Esophagus muscularis mucosa (tissue), 4 donors: ENCODE measurements at regions of chr16 and their contacts with region 1.

Region 1: GRCh38 chr16:67521095-67521804 is 7.4 kb upstream of the RIPOR1 start:
- DNase-seq: peak; percentile 99
- H3K4me3 ChIP-seq: peak overlapping the region; percentile 49 to 60 (median 52)
- H3K27ac ChIP-seq: peak overlapping the region; percentile 80 to 93 (median 92)
- H3K4me1 ChIP-seq: peaks cover 10 to 19% (median 14%) of the 10 kb centered on the region in 4 donors
- H3K27me3 ChIP-seq: no peaks in the 10 kb centered on the region
- CTCF ChIP-seq: peak; percentile 64 to 96 (median 75)
- EP300 ChIP-seq: no peak
- POLR2A ChIP-seq: no peak

Region 2: GRCh38 chr16:67268136-67268579 is 253.1 kb before region 1 on chr16:
- intact Hi-C with region 1: no loop called
- DNase-seq: no peak
- H3K4me3 ChIP-seq: no peak overlapping the region
- H3K27ac ChIP-seq: no peak overlapping the region
- H3K4me1 ChIP-seq: no peaks in the 10 kb centered on the region
- H3K27me3 ChIP-seq: peaks cover 0 to 34% (median 0%) of the 10 kb centered on the region in 4 donors
- CTCF ChIP-seq: no peak
- EP300 ChIP-seq: no peak
- POLR2A ChIP-seq: no peak

Region 3: DNA sequence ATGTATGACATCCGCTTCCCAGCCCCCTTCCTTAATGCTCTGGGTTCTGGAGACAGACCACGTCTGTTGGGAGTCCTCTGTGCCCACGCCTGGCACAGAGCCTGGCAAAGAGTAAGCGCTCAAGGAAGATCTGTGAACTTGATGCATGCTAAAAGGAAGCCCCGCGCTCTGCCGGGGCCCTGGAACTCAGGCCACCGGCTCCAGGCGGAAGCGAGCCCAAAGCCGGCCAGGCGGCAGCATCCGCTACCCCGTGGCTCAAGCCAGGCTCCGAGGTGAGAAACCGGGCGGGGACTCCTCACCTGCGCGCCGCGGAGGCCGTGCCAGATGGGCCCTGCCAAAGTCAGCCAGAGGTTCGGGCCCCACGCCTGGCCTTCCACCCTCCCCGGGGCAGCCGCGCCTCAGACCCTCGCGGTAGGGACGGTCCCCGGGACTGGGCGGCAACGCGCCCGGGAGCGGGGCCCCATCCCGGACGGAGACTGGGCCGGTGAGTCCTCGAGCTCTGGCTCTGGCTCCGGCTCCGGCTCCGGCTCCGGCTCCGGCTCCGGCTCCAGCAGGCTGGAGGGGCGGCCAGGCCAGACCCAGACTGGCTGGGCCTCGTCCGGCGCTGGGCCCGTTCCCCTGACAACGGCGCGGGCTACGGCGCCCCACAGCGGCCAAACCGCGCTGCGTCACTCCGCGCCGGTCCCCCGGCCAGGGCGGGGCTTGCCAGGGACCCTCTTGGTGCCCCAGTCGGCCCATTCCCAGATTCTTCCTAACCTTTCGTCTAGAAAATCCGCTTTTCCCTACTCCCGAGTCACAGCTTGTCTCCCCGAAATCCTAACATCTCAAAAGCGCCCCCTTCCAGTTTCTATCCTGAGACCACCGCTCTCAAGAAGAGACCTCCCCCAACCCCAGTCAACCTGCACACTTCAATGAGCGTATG is 105.1 kb before region 1 on chr16 and contains the start of gene ZDHHC1:
- intact Hi-C with region 1: no loop called
- DNase-seq: no peak
- H3K4me3 ChIP-seq: peak within 1 kb of the TSS; percentile 70 to 93 (median 77)
- H3K27ac ChIP-seq: peak within 1 kb of the TSS; percentile 77 to 87 (median 82)
- H3K4me1 ChIP-seq: peaks cover 12 to 28% (median 19%) of the 10 kb centered on the region in 4 donors
- H3K27me3 ChIP-seq: no peaks in the 10 kb centered on the region
- CTCF ChIP-seq: peak; percentile 51 to 62 (median 57)
- EP300 ChIP-seq: no peak
- POLR2A ChIP-seq: no peak
- total RNA-seq, gene ZDHHC1: 11.6 to 27.5 (median 20.8) TPM

Region 4: DNA sequence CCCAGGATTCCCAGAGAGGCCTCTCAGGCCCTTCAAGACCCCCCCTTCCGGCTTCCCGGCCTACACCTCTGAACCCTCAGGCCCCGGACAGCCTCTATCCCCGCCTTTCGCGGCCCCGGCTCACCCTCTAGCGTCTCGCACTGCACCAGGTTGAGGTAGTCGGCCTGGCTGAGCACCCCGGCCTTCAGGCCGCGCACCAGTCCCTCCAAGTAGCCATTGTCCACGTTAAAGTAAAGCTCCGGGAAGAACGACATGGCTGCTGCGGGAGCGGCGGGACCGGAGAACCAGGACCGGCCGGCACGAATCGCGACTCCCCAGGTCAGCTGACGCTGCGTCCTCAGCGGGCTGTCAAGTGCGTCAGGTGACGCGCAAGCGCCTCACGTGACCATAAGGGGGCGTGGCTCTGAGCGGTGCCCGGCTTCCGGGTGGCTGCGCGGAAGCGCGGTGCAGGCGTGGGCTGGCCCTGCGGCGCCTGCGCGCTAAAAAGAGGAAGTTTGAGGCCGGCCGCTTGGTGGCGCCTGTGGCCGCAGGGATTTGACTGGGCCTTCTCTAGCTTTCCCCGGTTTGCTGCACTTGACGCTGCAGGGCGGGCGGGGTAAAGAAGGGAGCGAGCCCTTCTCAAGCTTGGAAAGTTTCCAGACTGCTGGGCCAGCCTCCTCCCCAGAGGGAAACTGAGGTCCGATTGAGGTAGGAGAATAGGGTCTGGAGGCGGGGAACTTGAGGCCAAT is 40.3 kb before region 1 on chr16 and contains the start of gene ATP6V0D1:
- intact Hi-C with region 1: loop called (anchors 5 kb)
- DNase-seq: peak; percentile 100
- H3K4me3 ChIP-seq: peak within 1 kb of the TSS; percentile 85 to 97 (median 90)
- H3K27ac ChIP-seq: peak within 1 kb of the TSS; percentile 92 to 97 (median 95)
- H3K4me1 ChIP-seq: peaks cover 38 to 65% (median 61%) of the 10 kb centered on the region in 4 donors
- H3K27me3 ChIP-seq: no peaks in the 10 kb centered on the region
- CTCF ChIP-seq: peak; percentile 90 to 96 (median 92)
- EP300 ChIP-seq: no peak
- POLR2A ChIP-seq: peak; percentile 57
- total RNA-seq, gene ATP6V0D1: 103 to 131 (median 119) TPM

Region 5: DNA sequence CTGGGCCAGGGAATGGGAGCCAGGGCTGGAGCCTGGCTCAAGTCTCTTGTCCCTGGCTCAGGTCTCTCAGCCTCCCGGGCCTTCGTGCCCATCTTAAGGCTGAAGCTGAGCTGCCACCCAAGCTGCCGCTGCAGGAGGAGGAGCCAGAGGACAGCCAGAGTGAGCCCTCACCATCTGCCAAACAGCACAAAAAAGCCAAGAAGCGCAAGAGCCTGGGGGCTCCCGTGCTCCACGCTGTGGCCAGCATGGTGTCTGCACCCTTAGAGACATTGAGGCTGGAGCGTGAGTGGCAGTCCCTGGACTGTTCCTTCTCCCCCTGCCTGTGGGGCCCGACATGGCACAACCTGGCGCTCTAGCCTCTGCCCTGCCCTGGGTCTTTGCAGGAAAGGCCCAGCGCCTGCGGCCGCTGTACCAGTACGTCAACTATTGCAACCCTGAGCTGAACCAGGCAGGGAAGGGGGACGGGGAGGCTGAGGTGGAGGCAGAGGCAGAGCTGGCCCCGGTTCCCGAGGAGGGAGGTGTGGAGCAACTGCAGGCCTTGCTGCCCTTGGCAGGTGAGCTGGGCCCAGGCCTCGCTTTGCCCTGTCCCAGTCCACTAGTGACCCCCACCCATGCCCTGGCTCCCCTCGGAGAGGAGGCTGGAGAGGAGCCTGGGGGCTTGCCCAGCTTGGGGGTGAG is 146.7 kb after region 1 on chr16:
- intact Hi-C with region 1: loop called (anchors 2 kb)
- DNase-seq: peak; percentile 94
- H3K4me3 ChIP-seq: peak overlapping the region; percentile 67 to 91 (median 81)
- H3K27ac ChIP-seq: peak overlapping the region; percentile 88 to 95 (median 93)
- H3K4me1 ChIP-seq: peaks cover 34 to 45% (median 39%) of the 10 kb centered on the region in 4 donors
- H3K27me3 ChIP-seq: no peaks in the 10 kb centered on the region
- CTCF ChIP-seq: peak; percentile 77 to 97 (median 91)
- EP300 ChIP-seq: no peak
- POLR2A ChIP-seq: peak; percentile 7